Spleen (tissue), 13 donors: ENCODE measurements at regions of chr16 and their contacts with region 1.

Region 1: GRCh38 chr16:23803591-23804123 is 32.1 kb upstream of the PRKCB start:
- DNase-seq: peak; percentile 92
- H3K4me3 ChIP-seq: no peak overlapping the region
- H3K27ac ChIP-seq: peak overlapping the region in 1 of 8 donors; percentile 7
- H3K4me1 ChIP-seq: peaks cover 0 to 58% (median 33%) of the 10 kb centered on the region in 6 donors
- H3K27me3 ChIP-seq: peaks cover 0 to 5% (median 0%) of the 10 kb centered on the region in 7 donors
- CTCF ChIP-seq: peak; percentile 47 to 81 (median 69)
- POLR2A ChIP-seq: no peak

Region 2: DNA sequence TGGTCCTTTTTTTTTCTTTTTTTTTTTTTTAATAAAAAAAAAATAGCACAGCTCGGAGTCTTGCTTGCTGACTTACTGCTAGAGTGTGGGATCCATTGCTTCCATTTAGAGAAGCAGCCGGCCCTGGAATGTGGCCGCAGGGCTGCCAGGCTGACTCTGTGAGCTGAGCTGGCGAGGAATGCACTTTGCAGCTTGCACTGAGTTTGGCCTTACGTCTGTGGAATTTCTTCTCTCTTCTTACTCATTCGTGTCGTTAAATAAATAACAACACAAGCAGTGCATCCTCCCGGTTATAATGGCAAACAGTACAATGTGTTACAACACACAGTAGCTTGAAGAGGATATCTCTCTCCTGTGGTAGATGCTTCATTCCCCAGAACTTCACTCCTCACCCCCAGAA is 101.4 kb after region 1 on chr16:
- intact Hi-C with region 1: no loop called
- DNase-seq: no peak
- H3K4me3 ChIP-seq: no peak overlapping the region
- H3K27ac ChIP-seq: no peak overlapping the region
- H3K4me1 ChIP-seq: peaks cover 17 to 98% (median 55%) of the 10 kb centered on the region in 6 donors
- H3K27me3 ChIP-seq: no peaks in the 10 kb centered on the region
- CTCF ChIP-seq: no peak
- POLR2A ChIP-seq: no peak

Region 3: DNA sequence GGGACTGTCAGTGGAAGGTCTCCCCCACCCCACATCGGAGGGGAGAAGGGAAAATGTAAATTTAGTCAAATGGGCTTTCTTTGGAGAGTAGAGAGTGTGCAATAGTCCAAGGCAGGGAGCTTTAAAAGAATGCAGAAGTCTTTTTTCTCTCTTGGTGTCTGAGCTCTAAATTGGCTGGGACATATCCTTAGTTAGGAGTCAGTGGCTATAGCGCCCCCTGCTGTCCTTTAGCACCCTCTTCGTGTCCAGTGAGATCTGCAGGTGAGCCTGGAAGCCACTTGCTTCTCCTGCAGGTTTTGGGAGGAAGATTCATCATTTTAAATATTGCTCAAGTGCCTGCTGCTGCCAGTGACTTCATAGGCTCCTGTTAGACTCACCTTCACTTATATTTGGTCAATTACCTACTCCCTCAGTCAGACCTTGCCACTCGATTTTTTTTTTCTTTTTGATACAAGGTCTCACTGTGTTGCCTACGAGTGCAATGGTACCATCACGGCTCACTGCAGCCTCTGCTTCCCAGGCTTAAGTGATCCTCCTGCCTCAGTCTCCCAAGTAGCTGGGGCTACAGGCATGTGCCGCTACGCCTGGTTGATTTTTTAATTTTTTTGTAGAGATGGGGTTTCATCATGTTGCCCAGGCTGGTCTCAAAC is 206.9 kb after region 1 on chr16:
- intact Hi-C with region 1: loop called (anchors 5 kb)
- DNase-seq: peak; percentile 93
- H3K4me3 ChIP-seq: no peak overlapping the region
- H3K27ac ChIP-seq: peak overlapping the region in 4 of 8 donors; percentile 19 to 67 (median 48)
- H3K4me1 ChIP-seq: peaks cover 32 to 100% (median 78%) of the 10 kb centered on the region in 6 donors
- H3K27me3 ChIP-seq: no peaks in the 10 kb centered on the region
- CTCF ChIP-seq: peak; percentile 72 to 93 (median 87)
- POLR2A ChIP-seq: no peak

Region 4: DNA sequence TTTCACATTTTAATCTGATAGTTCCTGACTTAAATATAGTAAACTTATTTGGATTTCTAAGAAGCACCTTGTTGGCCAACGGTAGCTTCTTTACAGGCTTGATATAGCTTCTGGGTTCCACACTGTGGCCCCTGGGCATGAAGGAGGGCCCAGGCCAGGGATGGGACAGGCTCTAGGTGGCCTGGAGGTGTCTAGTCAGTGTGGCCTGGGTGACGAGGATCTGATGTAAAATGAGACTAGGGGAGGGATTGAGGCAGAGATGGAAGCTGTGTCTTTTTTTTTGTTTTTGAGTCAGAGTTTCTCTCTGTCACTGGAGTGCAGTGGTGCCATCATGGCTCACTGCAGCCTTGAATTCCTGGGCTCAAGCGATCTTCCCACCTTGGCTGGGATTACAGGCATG is 219.1 kb after region 1 on chr16:
- intact Hi-C with region 1: no loop called
- DNase-seq: no peak
- H3K4me3 ChIP-seq: no peak overlapping the region
- H3K27ac ChIP-seq: no peak overlapping the region
- H3K4me1 ChIP-seq: peaks cover 3 to 68% (median 16%) of the 10 kb centered on the region in 6 donors
- H3K27me3 ChIP-seq: no peaks in the 10 kb centered on the region
- CTCF ChIP-seq: no peak
- POLR2A ChIP-seq: no peak

Region 5: DNA sequence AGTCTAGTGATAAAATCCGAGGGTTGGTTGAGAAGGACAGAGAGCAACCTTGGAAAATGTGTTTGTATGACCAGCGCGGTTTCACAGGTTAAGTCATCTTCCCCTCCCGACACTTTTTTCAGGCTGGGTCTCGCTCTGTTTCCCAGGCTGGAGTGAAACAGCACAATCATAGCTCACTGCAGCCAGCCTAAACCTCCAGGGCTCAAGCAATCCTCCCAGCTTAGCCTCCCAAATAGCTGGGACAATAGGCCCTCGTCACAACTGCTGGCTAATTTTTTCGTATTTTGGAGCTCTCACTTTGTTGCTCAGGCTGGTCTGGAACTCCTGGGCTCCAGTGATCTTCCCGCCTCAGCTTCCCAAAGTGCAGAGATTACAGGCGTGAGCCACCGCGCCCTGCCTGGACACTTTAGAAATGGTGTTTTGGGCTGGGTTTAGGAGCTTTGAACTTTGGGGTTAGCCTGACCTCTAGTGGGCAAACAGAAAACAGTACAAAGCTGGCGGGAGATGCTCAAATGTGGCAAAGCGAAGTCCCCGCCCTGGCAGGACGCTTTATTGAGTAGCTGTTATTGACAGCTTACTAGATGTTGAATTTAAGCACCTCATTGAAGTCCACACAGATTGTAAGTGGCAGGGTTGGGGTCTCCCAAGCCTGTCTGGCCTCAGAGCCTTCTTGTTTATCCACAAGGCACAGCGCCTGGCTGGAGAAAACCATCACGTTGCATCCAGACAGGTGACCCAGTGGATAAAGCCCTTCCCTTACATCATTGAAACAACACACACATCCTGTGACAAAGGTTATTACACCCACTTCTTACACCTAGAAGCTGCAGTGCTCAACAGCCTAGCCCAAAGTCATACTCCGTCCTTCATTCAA is 701.1 kb after region 1 on chr16:
- intact Hi-C with region 1: loop called (anchors 10 kb)
- DNase-seq: no peak
- H3K4me3 ChIP-seq: no peak overlapping the region
- H3K27ac ChIP-seq: no peak overlapping the region
- H3K4me1 ChIP-seq: peaks cover 0 to 6% (median 0%) of the 10 kb centered on the region in 6 donors
- H3K27me3 ChIP-seq: peaks cover 0 to 51% (median 4%) of the 10 kb centered on the region in 7 donors
- CTCF ChIP-seq: peak; percentile 40 to 90 (median 70)
- POLR2A ChIP-seq: no peak